ENCODE measurements at regions of chr2 and their contacts with region 1.

Region 1: DNA sequence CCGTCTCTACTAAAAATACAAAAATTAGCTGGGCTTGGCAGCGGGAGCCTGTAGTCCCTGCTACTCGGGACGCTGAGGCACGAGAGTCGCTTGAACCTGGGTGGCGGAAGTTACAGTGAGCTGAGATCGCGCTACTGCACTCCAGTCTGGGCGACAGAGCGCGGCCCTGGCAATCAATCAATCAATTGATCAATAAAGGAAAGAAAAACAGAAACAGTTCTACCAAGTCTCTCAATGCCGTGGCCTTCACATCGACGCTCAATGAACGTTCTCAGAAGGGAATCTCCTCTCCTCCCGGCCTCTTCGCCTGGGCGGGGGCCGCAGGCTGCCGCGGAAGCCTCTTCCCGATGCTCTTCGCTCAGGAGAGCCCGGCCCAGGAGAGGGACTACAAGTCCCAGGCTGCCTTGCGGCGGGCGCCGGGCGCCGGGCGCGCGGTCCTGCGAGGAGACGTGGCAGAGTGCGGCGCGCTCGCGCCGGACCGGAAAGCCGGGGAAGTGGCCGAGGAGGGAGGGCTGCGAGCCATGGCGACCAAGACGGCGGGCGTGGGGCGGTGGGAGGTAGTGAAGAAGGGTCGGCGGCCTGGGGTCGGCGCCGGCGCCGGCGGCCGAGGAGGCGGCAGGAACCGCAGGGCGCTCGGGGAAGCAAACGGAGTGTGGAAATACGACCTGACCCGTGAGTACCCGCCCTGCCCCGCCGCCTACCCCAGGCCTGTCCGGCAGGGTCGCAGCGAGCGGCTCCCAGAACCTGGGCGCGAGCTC is at the start of gene TMEM214:
- DNase-seq: peak; percentile 89
- ATAC-seq: peak; percentile 96
- H3K4me3 Mint-ChIP-seq: peak within 1 kb of the TSS; percentile 89
- H3K27ac Mint-ChIP-seq: peak within 1 kb of the TSS; percentile 80
- H3K4me1 Mint-ChIP-seq: peaks cover 39% of the 10 kb centered on the region
- H3K27me3 Mint-ChIP-seq: no peaks in the 10 kb centered on the region
- total RNA-seq, gene TMEM214: 54.1 to 69.1 TPM

Region 2: GRCh38 chr2:26785431-26786206 is 247.1 kb before region 1 on chr2 and contains the start of gene CENPA:
- CTCF ChIA-PET with region 1: no interaction called
- POLR2A ChIA-PET with region 1: no interaction called
- intact Hi-C with region 1: loop called in 1 of 2 experiments (anchors 1 kb)
- DNase-seq: peak; percentile 97
- ATAC-seq: peak; percentile 100
- H3K4me3 Mint-ChIP-seq: peak within 1 kb of the TSS; percentile 80
- H3K27ac Mint-ChIP-seq: peak within 1 kb of the TSS; percentile 79
- H3K4me1 Mint-ChIP-seq: peaks cover 16% of the 10 kb centered on the region
- H3K27me3 Mint-ChIP-seq: peaks cover 7% of the 10 kb centered on the region
- total RNA-seq, gene CENPA: 37.0 to 38.0 TPM

Region 3: GRCh38 chr2:26870585-26871095 is 162.0 kb before region 1 on chr2:
- CTCF ChIA-PET with region 1: no interaction called
- POLR2A ChIA-PET with region 1: no interaction called
- intact Hi-C with region 1: no loop called
- DNase-seq: no peak
- ATAC-seq: no peak
- H3K4me3 Mint-ChIP-seq: no peak overlapping the region
- H3K27ac Mint-ChIP-seq: no peak overlapping the region
- H3K4me1 Mint-ChIP-seq: no peaks in the 10 kb centered on the region
- H3K27me3 Mint-ChIP-seq: peaks cover 13% of the 10 kb centered on the region

Region 4: DNA sequence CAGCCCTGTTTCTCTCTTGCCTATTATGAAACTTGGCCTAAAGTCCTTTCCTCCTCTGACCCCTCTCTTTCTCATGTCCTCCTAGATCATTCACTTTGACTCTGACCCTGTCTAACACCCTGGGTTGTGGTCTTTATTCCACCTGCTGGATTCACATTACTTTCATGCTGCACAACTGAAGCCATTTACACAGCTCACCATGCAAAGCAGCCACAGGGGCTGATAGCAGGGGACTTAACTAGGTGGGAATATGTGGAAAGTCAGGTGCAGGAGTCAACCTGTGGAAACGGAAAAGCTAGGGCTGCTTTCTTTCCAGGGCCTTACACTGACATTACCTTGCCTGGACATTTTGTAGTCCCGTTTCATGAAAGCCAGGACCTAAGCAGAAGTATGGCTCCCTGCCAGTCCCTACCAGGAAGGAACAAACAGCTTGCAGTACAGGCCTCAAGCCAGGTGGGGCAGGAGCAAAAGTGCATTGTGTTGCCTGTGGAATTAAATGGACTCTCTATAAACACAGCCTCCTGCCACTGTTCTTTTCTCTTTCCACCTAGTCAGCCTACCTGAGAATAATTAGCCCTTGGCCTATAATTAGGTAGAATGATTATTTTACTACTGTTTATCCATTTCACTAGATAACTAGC is 50.5 kb before region 1 on chr2:
- CTCF ChIA-PET with region 1: no interaction called
- POLR2A ChIA-PET with region 1: no interaction called
- intact Hi-C with region 1: no loop called
- DNase-seq: peak; percentile 42
- ATAC-seq: peak; percentile 57
- H3K4me3 Mint-ChIP-seq: no peak overlapping the region
- H3K27ac Mint-ChIP-seq: no peak overlapping the region
- H3K4me1 Mint-ChIP-seq: no peaks in the 10 kb centered on the region
- H3K27me3 Mint-ChIP-seq: no peaks in the 10 kb centered on the region

Region 5: GRCh38 chr2:27003857-27004256 is 28.8 kb before region 1 on chr2:
- CTCF ChIA-PET with region 1: no interaction called
- POLR2A ChIA-PET with region 1: no interaction called
- intact Hi-C with region 1: no loop called
- DNase-seq: no peak
- ATAC-seq: no peak
- H3K4me3 Mint-ChIP-seq: no peak overlapping the region
- H3K27ac Mint-ChIP-seq: no peak overlapping the region
- H3K4me1 Mint-ChIP-seq: no peaks in the 10 kb centered on the region
- H3K27me3 Mint-ChIP-seq: peaks cover 7% of the 10 kb centered on the region

Region 6: GRCh38 chr2:27071277-27071989 is 38.8 kb after region 1 on chr2 and contains the start of gene OST4:
- CTCF ChIA-PET with region 1: no interaction called
- POLR2A ChIA-PET with region 1: interaction called, 5 read pairs
- intact Hi-C with region 1: loop called in 1 of 2 experiments (anchors 1 kb)
- DNase-seq: peak; percentile 94
- ATAC-seq: peak; percentile 89
- H3K4me3 Mint-ChIP-seq: peak within 1 kb of the TSS; percentile 96
- H3K27ac Mint-ChIP-seq: peak within 1 kb of the TSS; percentile 91
- H3K4me1 Mint-ChIP-seq: peaks cover 66% of the 10 kb centered on the region
- H3K27me3 Mint-ChIP-seq: no peaks in the 10 kb centered on the region
- total RNA-seq, gene OST4: 305 to 406 TPM

Region 7: DNA sequence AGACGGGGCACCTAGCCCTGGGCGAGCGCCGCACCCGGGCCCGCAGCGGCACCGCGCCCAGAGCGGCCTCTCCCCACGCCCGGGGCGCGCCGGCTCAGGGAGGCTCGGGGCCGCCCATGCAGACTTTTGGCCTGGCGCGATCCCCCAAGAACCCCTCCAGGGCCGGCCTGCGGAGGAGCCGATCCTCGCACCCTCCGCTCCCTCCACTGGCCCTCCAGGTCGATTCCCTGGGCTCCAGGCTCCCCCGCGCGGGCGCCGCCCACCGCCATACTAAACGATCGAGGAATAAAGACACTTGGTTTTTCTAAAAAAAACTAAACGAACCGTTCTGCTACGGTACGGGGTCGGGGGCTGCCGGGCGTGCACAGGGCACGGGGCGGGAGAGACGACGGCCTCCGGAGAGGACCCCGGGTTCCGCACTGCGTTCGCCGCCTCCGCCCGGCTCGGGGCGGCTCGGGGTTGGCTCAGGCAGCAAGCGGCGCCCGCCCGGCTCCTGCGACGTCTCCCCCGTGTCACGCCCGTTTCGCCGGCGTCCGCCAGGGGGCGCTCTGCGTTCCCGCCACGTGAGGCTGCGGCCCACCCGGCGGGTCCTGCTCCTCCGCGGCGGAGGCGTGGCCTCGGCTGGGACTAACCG is 53.5 kb after region 1 on chr2:
- CTCF ChIA-PET with region 1: no interaction called
- POLR2A ChIA-PET with region 1: interaction called, 3 read pairs
- intact Hi-C with region 1: loop called (anchors 1 kb)
- DNase-seq: peak; percentile 98
- ATAC-seq: peak; percentile 89
- H3K4me3 Mint-ChIP-seq: peak overlapping the region; percentile 77
- H3K27ac Mint-ChIP-seq: peak overlapping the region; percentile 82
- H3K4me1 Mint-ChIP-seq: peaks cover 24% of the 10 kb centered on the region
- H3K27me3 Mint-ChIP-seq: no peaks in the 10 kb centered on the region

Region 8: GRCh38 chr2:27217217-27218121 is 184.8 kb after region 1 on chr2 and contains the start of gene CAD:
- CTCF ChIA-PET with region 1: no interaction called
- POLR2A ChIA-PET with region 1: no interaction called
- intact Hi-C with region 1: loop called in 1 of 2 experiments (anchors 1 kb)
- DNase-seq: peak; percentile 94
- ATAC-seq: peak; percentile 90
- H3K4me3 Mint-ChIP-seq: peak within 1 kb of the TSS; percentile 93
- H3K27ac Mint-ChIP-seq: peak within 1 kb of the TSS; percentile 87
- H3K4me1 Mint-ChIP-seq: peaks cover 37% of the 10 kb centered on the region
- H3K27me3 Mint-ChIP-seq: no peaks in the 10 kb centered on the region
- total RNA-seq, gene CAD: 107 to 147 TPM